ENCODE measurements at regions of chr1 and their contacts with region 1.

Region 1: DNA sequence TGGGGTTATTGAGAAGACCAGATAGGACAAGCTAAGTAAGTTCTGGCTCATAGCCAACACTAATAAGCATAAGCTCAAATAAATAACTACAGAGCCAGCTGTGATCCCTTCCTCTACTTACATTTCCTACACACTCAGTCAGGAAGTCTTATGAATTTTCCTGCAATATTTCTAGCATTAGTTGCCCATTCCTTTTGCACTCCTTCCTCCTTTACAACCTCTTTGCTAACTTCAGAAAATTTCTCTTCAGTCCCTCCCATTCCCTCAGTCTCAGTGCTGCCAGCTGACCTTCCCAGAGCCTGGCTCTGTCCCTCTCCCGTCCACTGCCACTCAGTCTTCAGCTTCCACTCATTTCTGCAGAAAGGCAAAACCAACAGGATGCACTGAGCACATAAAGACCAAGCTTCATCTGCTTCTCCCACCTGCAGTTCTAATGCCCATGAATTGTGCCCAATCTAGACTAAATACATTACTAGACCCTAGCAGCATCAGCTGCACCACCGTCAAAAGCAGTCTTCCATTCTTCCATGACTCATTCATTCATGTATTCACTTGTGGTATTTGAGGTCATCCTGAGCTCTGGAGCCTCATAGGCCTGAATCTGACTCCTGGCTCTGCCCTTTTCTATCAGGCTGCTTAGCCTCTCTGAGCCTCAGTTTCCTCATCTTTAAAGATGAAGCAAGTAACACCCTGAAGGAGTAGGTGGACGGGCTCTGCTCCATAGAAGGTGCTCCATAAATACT is 54.6 kb upstream of the SIPA1L2 start:
- DNase-seq: no peak
- ATAC-seq: no peak
- H3K4me3 ChIP-seq: no peak overlapping the region
- H3K27ac ChIP-seq: no peak overlapping the region
- H3K4me1 ChIP-seq: no peaks in the 10 kb centered on the region
- H3K27me3 ChIP-seq: no peaks in the 10 kb centered on the region; the same call in 1 of the 2 replicates
- CTCF ChIP-seq: no peak
- POLR2A ChIP-seq: no peak
- RAD21 ChIP-seq: no peak

Region 2: DNA sequence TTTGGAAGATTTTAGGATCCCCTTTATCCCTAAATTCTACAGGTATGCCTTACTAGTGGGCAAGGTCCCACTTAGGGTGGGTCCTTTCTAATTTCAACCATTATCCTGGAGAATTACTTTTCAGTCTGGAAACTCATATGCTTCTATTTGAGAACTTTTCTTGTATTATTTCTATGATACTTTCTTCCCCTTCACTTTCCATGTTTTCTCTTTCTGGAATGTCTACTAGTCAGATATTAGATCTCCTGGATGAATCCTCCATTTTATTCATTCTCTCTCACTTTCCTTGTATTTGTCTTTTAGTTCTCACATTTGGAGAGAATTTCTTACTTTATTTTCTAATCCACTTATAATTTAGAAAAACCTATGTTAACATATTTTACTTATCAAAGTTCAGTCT is 29.3 kb after region 1 on chr1:
- CTCF ChIA-PET with region 1: no interaction called
- POLR2A ChIA-PET with region 1: no interaction called
- RAD21 ChIA-PET with region 1: no interaction called
- intact Hi-C with region 1: loop called (anchors 1 kb)
- DNase-seq: no peak
- ATAC-seq: no peak
- H3K4me3 ChIP-seq: no peak overlapping the region
- H3K27ac ChIP-seq: no peak overlapping the region
- H3K4me1 ChIP-seq: no peaks in the 10 kb centered on the region
- H3K27me3 ChIP-seq: no peaks in the 10 kb centered on the region
- CTCF ChIP-seq: no peak
- POLR2A ChIP-seq: no peak
- RAD21 ChIP-seq: no peak

Region 3: GRCh38 chr1:232737917-232738316 is 53.4 kb after region 1 on chr1:
- CTCF ChIA-PET with region 1: no interaction called
- POLR2A ChIA-PET with region 1: no interaction called
- RAD21 ChIA-PET with region 1: no interaction called
- intact Hi-C with region 1: no loop called
- DNase-seq: no peak
- ATAC-seq: no peak
- H3K4me3 ChIP-seq: no peak overlapping the region
- H3K27ac ChIP-seq: no peak overlapping the region
- H3K4me1 ChIP-seq: no peaks in the 10 kb centered on the region
- H3K27me3 ChIP-seq: no peaks in the 10 kb centered on the region
- CTCF ChIP-seq: no peak
- POLR2A ChIP-seq: no peak
- RAD21 ChIP-seq: no peak

Measured in HCT116 (cell line).